Activated CD4-positive, alpha-beta T cell treated with anti-CD3 and anti-CD28 coated beads, Interleukin-2, amount 10 ng/mL, durations not matched to agents 7 days and 5 days (primary cell): ENCODE measurements at regions of chr14 and their contacts with region 1.

Region 1: DNA sequence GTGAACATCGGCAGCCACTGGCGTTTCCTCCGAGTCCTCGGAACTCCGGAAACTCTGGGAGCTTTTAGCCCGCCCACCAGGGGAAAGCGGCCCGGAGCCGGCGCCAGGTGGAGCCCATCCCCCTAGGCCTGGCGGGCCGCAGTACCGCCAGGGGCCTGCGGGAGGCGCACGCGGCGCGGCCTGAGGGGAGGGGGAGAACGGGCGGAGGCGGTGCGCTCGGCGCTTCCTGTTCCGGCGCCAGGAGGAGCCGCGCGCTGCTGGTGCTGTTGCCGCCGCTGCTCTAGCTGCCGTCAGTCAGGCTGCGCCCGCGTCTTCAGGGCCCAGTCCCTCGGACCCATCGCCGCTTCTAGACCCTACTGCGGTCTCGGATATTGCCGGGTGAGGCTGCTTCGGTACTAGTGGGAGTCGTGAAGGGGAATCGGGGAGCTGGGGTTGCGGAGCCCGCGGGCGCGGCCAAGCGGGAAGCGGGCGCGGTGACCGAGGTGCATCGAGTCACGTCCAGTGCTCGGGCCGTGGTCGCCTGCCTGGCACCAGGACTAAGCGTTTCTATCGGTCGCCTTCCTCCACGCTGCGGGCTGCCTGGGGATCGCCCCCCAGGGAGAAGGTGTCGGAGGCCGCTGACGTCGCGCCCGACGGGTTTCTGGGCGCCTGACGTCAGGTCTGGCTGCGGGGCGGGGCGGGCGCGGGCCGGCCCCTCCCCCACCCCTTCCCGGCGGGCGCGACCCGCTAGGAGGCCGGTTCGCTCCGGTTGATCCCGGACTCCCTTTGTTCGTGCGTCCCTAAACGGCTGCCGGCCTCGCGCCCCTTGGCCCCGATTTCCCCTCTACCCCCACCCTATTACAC is at the start of gene MAPK1IP1L:
- DNase-seq: peak; percentile 88
- H3K4me3 Mint-ChIP-seq: peak within 1 kb of the TSS; percentile 86
- H3K27ac Mint-ChIP-seq: peak within 1 kb of the TSS; percentile 91
- H3K4me1 Mint-ChIP-seq: peaks cover 40% of the 10 kb centered on the region
- H3K27me3 Mint-ChIP-seq: no peaks in the 10 kb centered on the region
- total RNA-seq, gene MAPK1IP1L: 94.3 to 118 TPM

Region 2: DNA sequence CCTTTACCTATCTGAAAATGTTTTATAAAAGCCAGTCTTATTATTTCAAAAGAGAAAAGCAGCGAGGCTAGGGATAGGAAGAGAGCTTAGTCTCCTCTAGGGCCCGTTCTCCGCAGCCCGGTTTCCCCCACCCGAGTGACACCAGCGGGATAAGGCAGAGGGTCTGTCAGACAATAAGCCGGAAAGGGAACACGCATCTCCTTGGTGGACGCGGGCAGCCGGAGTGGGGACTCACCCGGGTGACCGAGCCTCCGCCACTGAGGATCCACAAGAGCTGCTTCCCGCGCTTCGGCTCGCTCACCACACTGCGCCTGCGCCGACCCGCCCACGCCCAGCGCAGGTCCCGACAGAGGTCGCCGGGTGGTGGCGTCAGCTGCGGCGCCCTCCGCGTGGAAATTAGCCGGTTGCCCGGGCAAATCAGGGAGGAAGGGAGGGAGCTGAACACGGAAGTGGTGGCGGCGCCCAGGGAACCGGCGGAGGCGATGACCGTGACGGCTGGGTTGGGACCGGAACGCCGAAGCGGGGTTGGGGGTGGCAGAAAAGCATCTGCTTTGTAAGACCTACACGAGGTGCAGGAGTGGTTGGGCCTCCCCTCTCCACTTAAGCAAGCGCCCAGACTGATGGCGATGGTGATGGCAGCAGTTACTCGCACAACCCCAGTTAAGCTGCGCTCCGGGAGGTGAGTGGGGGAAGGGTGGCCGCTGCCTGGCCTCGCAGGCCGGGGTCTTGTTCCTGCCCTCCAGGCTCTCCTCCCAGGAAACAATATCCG is 24.7 kb before region 1 on chr14 and contains the starts of genes SOCS4 and WDHD1:
- CTCF ChIA-PET with region 1: interaction called, 29 read pairs
- POLR2A ChIA-PET with region 1: no interaction called
- DNase-seq: peak; percentile 96
- H3K4me3 Mint-ChIP-seq: peak within 1 kb of the TSS; percentile 91
- H3K27ac Mint-ChIP-seq: peak within 1 kb of the TSS; percentile 95
- H3K4me1 Mint-ChIP-seq: peaks cover 53% of the 10 kb centered on the region
- H3K27me3 Mint-ChIP-seq: no peaks in the 10 kb centered on the region
- total RNA-seq, gene SOCS4: 29.9 to 30.3 TPM
- total RNA-seq, gene WDHD1: 37.5 to 44.1 TPM

Region 3: DNA sequence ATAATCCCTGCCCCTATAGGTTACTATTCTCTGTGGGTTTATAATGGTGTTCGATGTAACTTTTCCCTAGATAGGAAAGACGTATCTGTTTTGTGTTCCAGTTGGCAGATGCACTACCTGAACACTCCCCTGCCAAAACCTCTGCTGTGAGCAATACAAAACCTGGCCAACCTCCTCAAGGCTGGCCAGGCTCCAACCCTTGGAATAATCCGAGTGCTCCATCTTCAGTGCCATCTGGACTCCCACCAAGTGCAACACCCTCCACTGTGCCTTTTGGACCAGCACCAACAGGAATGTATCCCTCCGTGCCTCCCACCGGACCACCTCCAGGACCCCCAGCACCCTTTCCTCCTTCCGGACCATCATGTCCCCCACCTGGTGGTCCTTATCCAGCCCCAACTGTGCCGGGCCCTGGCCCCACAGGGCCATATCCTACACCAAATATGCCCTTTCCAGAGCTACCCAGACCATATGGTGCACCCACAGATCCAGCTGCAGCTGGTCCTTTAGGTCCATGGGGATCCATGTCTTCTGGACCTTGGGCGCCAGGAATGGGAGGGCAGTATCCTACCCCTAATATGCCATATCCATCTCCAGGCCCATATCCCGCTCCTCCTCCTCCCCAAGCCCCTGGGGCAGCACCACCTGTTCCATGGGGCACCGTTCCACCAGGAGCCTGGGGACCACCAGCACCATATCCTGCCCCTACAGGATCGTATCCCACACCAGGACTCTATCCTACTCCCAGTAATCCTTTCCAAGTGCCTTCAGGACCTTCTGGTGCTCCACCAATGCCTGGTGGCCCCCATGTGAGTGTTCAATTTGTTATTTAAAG is 11.1 kb after region 1 on chr14:
- CTCF ChIA-PET with region 1: interaction called, 22 read pairs
- POLR2A ChIA-PET with region 1: no interaction called
- DNase-seq: no peak
- H3K4me3 Mint-ChIP-seq: no peak overlapping the region
- H3K27ac Mint-ChIP-seq: no peak overlapping the region
- H3K4me1 Mint-ChIP-seq: peaks cover 17% of the 10 kb centered on the region
- H3K27me3 Mint-ChIP-seq: no peaks in the 10 kb centered on the region

Region 4: GRCh38 chr14:55077155-55077554 is 25.5 kb after region 1 on chr14:
- CTCF ChIA-PET with region 1: interaction called, 15 read pairs
- POLR2A ChIA-PET with region 1: no interaction called
- DNase-seq: peak; percentile 25
- H3K4me3 Mint-ChIP-seq: no peak overlapping the region
- H3K27ac Mint-ChIP-seq: no peak overlapping the region
- H3K4me1 Mint-ChIP-seq: peaks cover 25% of the 10 kb centered on the region
- H3K27me3 Mint-ChIP-seq: no peaks in the 10 kb centered on the region

Region 5: DNA sequence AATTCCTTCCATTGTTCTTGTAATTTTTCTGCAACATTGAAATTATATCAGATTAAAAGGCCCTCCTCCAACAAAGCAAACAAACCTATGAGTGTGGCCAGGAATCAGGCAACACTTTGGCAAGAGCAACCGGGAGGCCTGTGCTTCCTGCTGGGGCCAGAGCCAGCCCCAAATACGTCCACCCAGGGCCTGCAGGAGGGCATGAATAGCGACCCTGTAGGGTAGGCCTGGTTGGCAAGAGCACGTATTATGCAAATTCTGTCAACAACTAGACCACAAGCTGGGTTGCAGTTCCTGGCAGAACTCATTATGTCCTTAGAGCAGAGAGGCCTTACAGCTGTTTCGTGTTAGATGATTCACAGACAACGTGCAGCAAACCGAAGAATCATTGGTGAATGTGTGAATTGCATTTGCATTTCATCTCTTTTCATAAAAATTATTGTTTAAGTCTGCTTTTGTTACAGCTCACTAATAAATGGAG is 50.5 kb after region 1 on chr14:
- CTCF ChIA-PET with region 1: interaction called, 11 read pairs
- POLR2A ChIA-PET with region 1: no interaction called
- DNase-seq: peak; percentile 62
- H3K4me3 Mint-ChIP-seq: peak overlapping the region; percentile 65
- H3K27ac Mint-ChIP-seq: peak overlapping the region; percentile 99
- H3K4me1 Mint-ChIP-seq: peaks cover 68% of the 10 kb centered on the region
- H3K27me3 Mint-ChIP-seq: no peaks in the 10 kb centered on the region